ENCODE measurements at regions of chr13 and their contacts with region 1.

Region 1: GRCh38 chr13:80342471-80343380 is 1.8 kb upstream of the SPRY2 start:
- DNase-seq: no peak
- H3K4me3 ChIP-seq: peak overlapping the region; percentile 91
- CTCF ChIP-seq: peak; percentile 94

Region 2: DNA sequence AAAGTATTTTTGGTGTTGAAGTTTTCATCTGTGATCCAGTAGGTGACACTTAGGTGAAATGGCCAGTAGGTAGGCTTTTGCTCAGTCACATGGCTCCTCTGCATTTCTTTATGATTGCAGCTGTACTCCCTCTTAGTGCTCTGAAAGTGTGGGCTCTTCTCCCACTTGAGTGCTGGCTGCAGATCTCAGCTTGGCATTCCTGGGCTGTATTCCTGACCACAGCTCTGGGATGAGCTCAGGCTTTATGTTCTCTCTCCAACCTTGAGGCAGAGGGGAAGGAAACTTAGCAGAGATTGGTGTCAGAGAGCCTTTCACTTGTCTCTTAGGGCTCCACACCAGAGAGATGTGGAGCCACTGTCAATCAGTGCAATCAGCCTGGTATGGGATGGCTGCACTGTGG is 607.5 kb before region 1 on chr13:
- CTCF ChIA-PET with region 1: interaction called, 11 read pairs
- POLR2A ChIA-PET with region 1: no interaction called
- DNase-seq: no peak
- H3K4me3 ChIP-seq: no peak overlapping the region
- CTCF ChIP-seq: no peak

Region 3: GRCh38 chr13:79782541-79783205 is 560.1 kb before region 1 on chr13:
- CTCF ChIA-PET with region 1: interaction called, 25 read pairs
- POLR2A ChIA-PET with region 1: no interaction called
- DNase-seq: no peak
- H3K4me3 ChIP-seq: no peak overlapping the region
- CTCF ChIP-seq: no peak

Region 4: GRCh38 chr13:79936368-79937136 is 406.2 kb before region 1 on chr13:
- CTCF ChIA-PET with region 1: interaction called, 22 read pairs
- POLR2A ChIA-PET with region 1: interaction called, 29 read pairs
- DNase-seq: peak; percentile 100
- H3K4me3 ChIP-seq: no peak overlapping the region
- CTCF ChIP-seq: no peak

Region 5: GRCh38 chr13:80037505-80037888 is 305.2 kb before region 1 on chr13:
- CTCF ChIA-PET with region 1: interaction called, 11 read pairs
- POLR2A ChIA-PET with region 1: interaction called, 7 read pairs
- DNase-seq: peak; percentile 72
- H3K4me3 ChIP-seq: no peak overlapping the region
- CTCF ChIP-seq: no peak

Region 6: GRCh38 chr13:80086304-80086721 is 256.4 kb before region 1 on chr13:
- CTCF ChIA-PET with region 1: interaction called, 12 read pairs
- POLR2A ChIA-PET with region 1: interaction called, 5 read pairs
- DNase-seq: no peak
- H3K4me3 ChIP-seq: no peak overlapping the region
- CTCF ChIP-seq: no peak

Region 7: GRCh38 chr13:80363890-80364503 is 21.3 kb after region 1 on chr13:
- CTCF ChIA-PET with region 1: interaction called, 161 read pairs
- POLR2A ChIA-PET with region 1: interaction called, 7 read pairs
- DNase-seq: no peak
- H3K4me3 ChIP-seq: no peak overlapping the region
- CTCF ChIP-seq: peak; percentile 60

Region 8: DNA sequence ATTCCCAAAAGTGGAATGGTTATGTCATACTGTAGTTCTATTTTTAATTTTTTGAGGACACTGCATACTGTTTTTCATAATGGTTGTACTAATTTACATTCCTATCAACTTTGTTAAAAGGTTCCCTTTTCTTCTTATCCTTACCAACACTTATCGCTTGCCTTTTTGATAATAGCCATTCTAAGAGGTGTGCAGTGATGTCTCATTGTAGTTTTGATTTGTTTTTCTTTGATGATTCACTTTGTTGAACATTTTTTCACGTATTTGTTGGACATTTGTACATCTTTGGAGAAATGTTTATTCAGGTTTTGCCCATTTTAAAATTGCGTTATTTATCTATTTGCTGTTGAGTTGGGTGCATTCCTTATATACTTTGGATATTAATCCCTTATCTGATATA is 187.0 kb after region 1 on chr13:
- CTCF ChIA-PET with region 1: no interaction called
- POLR2A ChIA-PET with region 1: no interaction called
- DNase-seq: no peak
- H3K4me3 ChIP-seq: no peak overlapping the region
- CTCF ChIP-seq: no peak

Measured in AG04449 (cell line).